ENCODE measurements at regions of chr13 and their contacts with region 1.

Region 1: GRCh38 chr13:51070005-51070649 is 40.9 kb downstream of the C13orf42 start:
- DNase-seq: peak; percentile 75

Region 2: DNA sequence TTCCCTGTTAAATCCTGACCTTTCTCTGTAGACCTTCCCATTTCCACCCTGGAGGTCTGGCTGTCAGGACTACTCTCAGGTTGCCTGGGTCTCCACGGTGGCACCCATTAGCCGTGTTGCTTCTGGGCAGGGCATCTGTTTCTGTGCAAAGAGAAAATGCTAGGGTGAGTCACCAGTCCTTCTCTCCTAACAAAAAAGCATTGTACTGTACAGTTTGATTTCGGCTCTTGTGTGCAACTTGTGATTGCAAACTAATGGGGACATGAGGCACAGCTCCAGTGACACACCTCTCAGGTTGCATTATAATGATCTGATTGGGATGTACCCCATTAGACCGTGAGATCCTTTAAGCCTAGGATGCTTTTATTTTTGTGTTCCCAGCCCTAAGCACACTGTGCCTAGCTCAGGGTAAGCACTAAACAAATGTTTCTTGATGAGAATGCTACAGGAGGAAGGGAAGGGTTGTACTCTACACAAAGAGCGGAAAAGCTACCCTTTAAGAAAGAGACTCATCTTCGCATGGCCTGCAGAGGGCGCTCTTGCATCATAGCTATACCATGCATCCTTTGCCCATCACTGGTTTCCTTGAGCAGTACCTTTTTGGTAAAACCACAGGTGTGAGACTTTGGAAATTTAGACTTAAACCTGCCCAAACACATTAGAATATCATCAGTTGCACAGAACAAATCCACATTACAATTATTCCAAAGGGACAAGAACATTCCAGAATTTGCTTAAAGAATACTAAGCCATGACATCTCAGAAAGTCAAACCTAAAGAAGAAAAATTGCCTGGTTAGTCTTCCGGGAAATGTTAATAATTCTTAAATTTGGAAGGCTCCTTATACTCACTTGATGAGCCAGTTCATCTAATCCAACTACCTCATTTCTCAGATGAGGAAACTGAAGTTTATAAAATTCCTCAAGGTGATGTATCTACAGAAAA is 1093.5 kb before region 1 on chr13:
- CTCF ChIA-PET with region 1: interaction called, 11 read pairs
- POLR2A ChIA-PET with region 1: no interaction called
- DNase-seq: peak; percentile 76

Region 3: DNA sequence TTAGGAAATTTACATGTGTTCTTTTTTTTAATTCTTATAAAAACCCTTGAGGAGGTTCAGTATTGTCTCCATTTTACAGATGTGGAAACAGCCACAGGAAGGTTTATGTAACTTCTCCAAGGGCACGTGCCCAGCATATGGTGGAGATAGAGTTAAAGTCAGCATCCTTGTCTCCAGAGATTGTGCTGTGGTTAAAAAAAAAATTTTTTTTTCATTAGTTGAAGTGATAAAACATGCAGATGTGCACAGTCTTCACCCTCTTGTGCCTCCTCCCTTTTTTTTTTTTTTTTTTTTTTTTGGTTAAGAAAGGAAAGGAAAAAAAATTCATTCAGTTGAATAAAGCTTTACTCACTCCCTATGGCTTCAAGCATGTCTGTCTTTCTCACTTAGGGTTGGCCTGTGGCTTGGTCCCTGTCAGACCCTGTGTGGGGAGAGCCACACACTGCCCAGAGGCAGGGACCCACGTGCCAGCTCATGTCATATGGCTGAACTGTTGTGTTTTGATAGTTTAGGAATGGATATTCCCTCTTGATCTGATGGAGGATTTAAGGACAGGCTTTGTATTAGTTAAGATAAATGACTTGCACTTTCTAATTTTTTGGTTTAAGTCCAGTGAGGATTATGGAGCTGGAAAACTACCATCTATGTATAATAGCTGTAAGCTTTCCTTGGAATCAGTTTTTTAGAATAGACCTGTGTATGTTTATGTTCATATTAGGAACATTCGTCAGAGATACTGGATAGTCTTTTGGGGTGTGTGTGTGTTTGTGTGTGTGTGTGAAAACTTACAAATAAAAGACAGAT is 141.3 kb before region 1 on chr13:
- CTCF ChIA-PET with region 1: no interaction called
- POLR2A ChIA-PET with region 1: no interaction called
- DNase-seq: no peak

Region 4: DNA sequence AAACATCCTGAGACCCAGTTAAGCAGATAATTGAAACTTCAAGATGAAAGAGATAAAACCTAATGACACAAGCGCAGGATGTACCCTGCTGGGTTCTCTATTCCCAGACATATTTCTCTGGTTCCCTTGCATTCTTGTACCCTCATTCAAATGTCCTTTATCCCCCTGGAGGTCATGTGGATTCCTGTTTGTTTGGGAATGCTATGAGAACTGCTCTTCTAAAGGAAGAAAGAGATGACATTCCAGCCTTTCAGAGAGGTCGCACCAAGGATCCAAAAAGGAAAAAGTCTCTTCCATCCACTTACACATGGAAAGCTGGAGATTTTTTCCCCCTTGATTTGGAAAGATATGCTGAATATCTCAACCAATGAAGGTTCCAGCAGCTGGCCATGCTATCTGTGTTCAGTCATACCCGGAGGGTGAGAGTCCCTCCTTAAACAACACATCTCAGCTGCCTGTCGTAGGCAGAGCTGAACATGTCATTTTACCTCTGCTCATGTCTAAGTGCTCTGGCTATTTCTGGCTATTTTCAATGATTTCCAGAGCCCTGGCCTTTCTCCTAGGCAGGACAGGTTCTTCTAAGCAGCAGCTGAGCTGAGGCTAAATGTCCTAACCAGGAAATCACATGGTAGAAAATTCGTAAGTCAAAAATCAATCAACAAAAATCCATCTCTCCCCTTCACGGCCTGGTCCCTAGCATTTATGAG is 11.5 kb before region 1 on chr13:
- CTCF ChIA-PET with region 1: no interaction called
- POLR2A ChIA-PET with region 1: no interaction called
- DNase-seq: no peak

Measured in HEK293T (cell line).